ENCODE measurements at regions of chr14 and their contacts with region 1.

Region 1: DNA sequence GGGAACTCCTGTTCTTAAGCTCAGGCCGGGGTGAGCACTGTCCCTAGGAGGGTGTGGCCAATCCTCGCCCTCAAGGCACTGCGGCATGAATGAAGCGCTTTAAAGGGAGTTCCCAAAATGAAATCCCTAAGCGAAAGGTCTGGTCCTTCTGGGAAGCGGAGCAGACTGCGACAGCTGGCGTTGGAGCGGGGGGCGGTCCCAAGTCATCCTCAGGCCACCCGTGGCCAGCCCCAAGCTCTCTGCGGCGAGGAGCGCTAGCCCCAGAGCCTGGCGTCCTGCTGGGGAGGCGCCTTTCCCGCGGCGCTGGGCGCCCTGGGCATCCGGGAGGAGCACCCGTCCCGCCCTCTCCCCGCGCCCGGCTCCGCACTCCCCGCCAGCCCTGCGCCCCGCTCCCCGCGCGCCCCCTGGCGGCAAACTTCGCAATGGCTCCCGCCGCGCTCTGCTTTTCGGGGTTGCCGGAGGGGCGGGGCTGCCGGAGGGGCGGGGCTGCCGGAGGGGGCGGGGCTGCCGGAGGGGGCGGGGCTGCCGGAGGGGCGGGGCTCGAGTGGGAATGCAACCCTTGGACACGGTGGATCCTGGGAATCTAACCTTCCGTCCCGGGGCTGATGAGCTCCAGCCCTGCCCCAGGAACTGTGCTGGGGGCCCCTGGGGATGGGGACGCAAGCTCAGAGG is 25.4 kb downstream of the ZBTB42 start:
- DNase-seq: peak; percentile 95
- H3K4me3 ChIP-seq: peak overlapping the region; percentile 57 to 65
- H3K27ac ChIP-seq: peak overlapping the region in 1 of 2 experiments; percentile 35; a peak in 1 of 4 replicates
- H3K4me1 ChIP-seq: peaks cover 0 to 14% of the 10 kb centered on the region in 2 experiments; a peak in 1 of 4 replicates
- H3K27me3 ChIP-seq: no peaks in the 10 kb centered on the region
- CTCF ChIP-seq: peak; percentile 57
- EP300 ChIP-seq: no peak
- RAD21 ChIP-seq: peak; percentile 60

Region 2: GRCh38 chr14:104800015-104800770 is 26.1 kb before region 1 on chr14:
- CTCF ChIA-PET with region 1: interaction called, 26 read pairs
- POLR2A ChIA-PET with region 1: no interaction called
- DNase-seq: peak; percentile 97
- H3K4me3 ChIP-seq: peak overlapping the region; percentile 47 to 67; a peak in 3 of 4 replicates
- H3K27ac ChIP-seq: peak overlapping the region in 1 of 2 experiments; percentile 39; a peak in 1 of 4 replicates
- H3K4me1 ChIP-seq: peaks cover 17 to 51% of the 10 kb centered on the region in 2 experiments; a peak in 3 of 4 replicates
- H3K27me3 ChIP-seq: no peaks in the 10 kb centered on the region
- CTCF ChIP-seq: peak; percentile 46
- EP300 ChIP-seq: no peak
- RAD21 ChIP-seq: no peak

Region 3: GRCh38 chr14:104843442-104844305 is 17.3 kb after region 1 on chr14:
- CTCF ChIA-PET with region 1: interaction called, 14 read pairs
- POLR2A ChIA-PET with region 1: no interaction called
- DNase-seq: peak; percentile 49
- H3K4me3 ChIP-seq: no peak overlapping the region; a peak in 1 of 4 replicates
- H3K27ac ChIP-seq: no peak overlapping the region
- H3K4me1 ChIP-seq: no peaks in the 10 kb centered on the region; a peak in 1 of 4 replicates
- H3K27me3 ChIP-seq: peaks cover 42% of the 10 kb centered on the region
- CTCF ChIP-seq: no peak
- EP300 ChIP-seq: no peak
- RAD21 ChIP-seq: no peak

Measured in SK-N-SH (cell line).